B cell (primary cell): ENCODE measurements at regions of chr14 and their contacts with region 1.

Region 1: DNA sequence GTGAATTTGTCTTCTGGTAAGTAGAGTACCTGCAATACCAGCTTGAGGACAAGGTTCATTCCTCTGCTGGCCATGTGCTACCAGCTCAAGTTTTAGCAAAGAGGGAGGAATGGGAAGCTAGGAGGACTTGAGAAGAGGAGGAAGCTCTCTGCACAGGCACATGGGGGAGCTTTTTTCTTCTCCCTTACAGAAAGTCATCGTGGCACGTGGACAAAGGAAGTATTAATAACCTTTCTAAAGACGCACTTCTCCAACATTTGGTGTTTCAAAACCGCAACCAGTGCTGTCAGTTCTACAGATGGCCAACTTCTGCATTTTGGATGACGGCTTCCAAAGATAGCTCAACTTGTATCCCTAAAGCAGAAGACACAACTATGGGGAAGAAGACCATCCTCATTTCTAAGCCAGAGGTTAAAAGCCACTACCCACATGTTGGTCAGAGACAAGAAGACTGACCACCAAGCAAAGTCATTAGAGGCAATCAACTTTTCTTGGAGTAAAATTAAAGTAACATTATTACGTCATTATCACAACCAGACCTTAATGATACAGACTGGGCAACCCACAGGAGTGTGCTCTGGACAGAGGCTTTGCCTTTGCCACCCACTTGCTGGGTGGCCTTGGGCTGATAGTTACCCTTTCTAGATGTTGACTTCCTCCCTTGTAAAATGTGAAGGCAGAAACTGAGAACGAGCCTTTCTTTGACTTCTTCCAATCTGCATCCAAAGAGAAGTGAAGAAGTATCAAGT is 12.3 kb upstream of the TMED10 start:
- DNase-seq: peak; percentile 90
- ATAC-seq: peak; percentile 78
- H3K4me3 ChIP-seq: no peak overlapping the region
- H3K4me3 Mint-ChIP-seq: peak overlapping the region; percentile 47
- H3K27ac ChIP-seq: peak overlapping the region in 1 of 2 donors; percentile 21
- H3K27ac Mint-ChIP-seq: peak overlapping the region; percentile 47
- H3K4me1 ChIP-seq: peaks cover 18 to 25% of the 10 kb centered on the region in 2 donors
- H3K4me1 Mint-ChIP-seq: peaks cover 25% of the 10 kb centered on the region
- H3K27me3 ChIP-seq: no peaks in the 10 kb centered on the region
- H3K27me3 Mint-ChIP-seq: no peaks in the 10 kb centered on the region
- CTCF ChIP-seq: peak; percentile 10

Region 2: GRCh38 chr14:75176142-75176820 is 12.4 kb before region 1 on chr14 and contains the start of gene TMED10:
- CTCF ChIA-PET with region 1: interaction called, 4 read pairs
- POLR2A ChIA-PET with region 1: interaction called, 11 read pairs
- intact Hi-C with region 1: loop called (anchors 1 kb)
- DNase-seq: peak; percentile 97
- ATAC-seq: peak; percentile 74
- H3K4me3 ChIP-seq: peak within 1 kb of the TSS; percentile 82 to 99 (median 91)
- H3K4me3 Mint-ChIP-seq: peak within 1 kb of the TSS; percentile 92
- H3K27ac ChIP-seq: peak within 1 kb of the TSS; percentile 97 to 99
- H3K27ac Mint-ChIP-seq: peak within 1 kb of the TSS; percentile 97
- H3K4me1 ChIP-seq: peaks cover 17 to 22% of the 10 kb centered on the region in 2 donors
- H3K4me1 Mint-ChIP-seq: peaks cover 32% of the 10 kb centered on the region
- H3K27me3 ChIP-seq: no peaks in the 10 kb centered on the region
- H3K27me3 Mint-ChIP-seq: no peaks in the 10 kb centered on the region
- CTCF ChIP-seq: no peak
- total RNA-seq, gene TMED10: 111 and 119 TPM in 2 replicates

Region 3: GRCh38 chr14:75202657-75203056 is 14.0 kb after region 1 on chr14:
- CTCF ChIA-PET with region 1: interaction called, 3 read pairs
- POLR2A ChIA-PET with region 1: no interaction called
- intact Hi-C with region 1: loop called (anchors 2 kb)
- DNase-seq: no peak
- ATAC-seq: no peak
- H3K4me3 ChIP-seq: no peak overlapping the region
- H3K4me3 Mint-ChIP-seq: no peak overlapping the region
- H3K27ac ChIP-seq: no peak overlapping the region
- H3K27ac Mint-ChIP-seq: no peak overlapping the region
- H3K4me1 ChIP-seq: no peaks in the 10 kb centered on the region
- H3K4me1 Mint-ChIP-seq: no peaks in the 10 kb centered on the region
- H3K27me3 ChIP-seq: no peaks in the 10 kb centered on the region
- H3K27me3 Mint-ChIP-seq: no peaks in the 10 kb centered on the region
- CTCF ChIP-seq: no peak

Region 4: DNA sequence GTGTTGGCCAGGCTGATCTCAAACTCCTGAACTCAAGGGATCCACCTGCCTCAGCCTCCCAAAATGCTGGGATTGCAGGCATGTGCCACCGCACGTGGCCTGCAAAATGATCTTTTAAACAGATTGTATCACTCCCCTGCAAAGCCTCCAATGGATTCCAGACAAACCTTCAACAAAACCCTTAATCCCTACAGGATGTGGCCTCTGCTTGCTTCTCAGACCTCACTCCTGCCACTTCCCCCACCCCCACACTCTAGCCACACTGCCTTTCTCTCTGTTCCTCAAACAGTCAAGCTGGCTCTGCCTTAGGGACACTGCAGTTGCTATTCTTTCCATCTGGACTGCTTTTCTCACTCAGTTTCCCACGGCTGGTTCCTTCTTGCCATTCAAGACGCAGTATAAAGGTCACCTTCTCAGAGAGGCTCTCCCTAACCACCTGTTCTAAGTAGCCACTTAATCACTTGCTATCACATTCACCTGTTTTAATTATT is 35.0 kb after region 1 on chr14:
- CTCF ChIA-PET with region 1: no interaction called
- POLR2A ChIA-PET with region 1: interaction called, 3 read pairs
- intact Hi-C with region 1: loop called (anchors 5 kb)
- DNase-seq: peak; percentile 64
- ATAC-seq: peak; percentile 54
- H3K4me3 ChIP-seq: no peak overlapping the region
- H3K4me3 Mint-ChIP-seq: peak overlapping the region; percentile 35
- H3K27ac ChIP-seq: no peak overlapping the region
- H3K27ac Mint-ChIP-seq: peak overlapping the region; percentile 12
- H3K4me1 ChIP-seq: peaks cover 34 to 45% of the 10 kb centered on the region in 2 donors
- H3K4me1 Mint-ChIP-seq: peaks cover 39% of the 10 kb centered on the region
- H3K27me3 ChIP-seq: no peaks in the 10 kb centered on the region
- H3K27me3 Mint-ChIP-seq: no peaks in the 10 kb centered on the region
- CTCF ChIP-seq: no peak

Region 5: GRCh38 chr14:75230140-75231045 is 41.7 kb after region 1 on chr14:
- CTCF ChIA-PET with region 1: interaction called, 3 read pairs
- POLR2A ChIA-PET with region 1: no interaction called
- intact Hi-C with region 1: loop called (anchors 2 kb)
- DNase-seq: peak; percentile 71
- ATAC-seq: peak; percentile 77
- H3K4me3 ChIP-seq: no peak overlapping the region
- H3K4me3 Mint-ChIP-seq: peak overlapping the region; percentile 48
- H3K27ac ChIP-seq: peak overlapping the region; percentile 4 to 20
- H3K27ac Mint-ChIP-seq: peak overlapping the region; percentile 17
- H3K4me1 ChIP-seq: peaks cover 28 to 35% of the 10 kb centered on the region in 2 donors
- H3K4me1 Mint-ChIP-seq: peaks cover 37% of the 10 kb centered on the region
- H3K27me3 ChIP-seq: no peaks in the 10 kb centered on the region
- H3K27me3 Mint-ChIP-seq: no peaks in the 10 kb centered on the region
- CTCF ChIP-seq: peak; percentile 26

Region 6: GRCh38 chr14:75258615-75259466 is 70.1 kb after region 1 on chr14:
- CTCF ChIA-PET with region 1: interaction called, 5 read pairs
- POLR2A ChIA-PET with region 1: interaction called, 3 read pairs
- intact Hi-C with region 1: loop called (anchors 1 kb)
- DNase-seq: peak; percentile 100
- ATAC-seq: peak; percentile 86
- H3K4me3 ChIP-seq: peak overlapping the region; percentile 60 to 72 (median 67)
- H3K4me3 Mint-ChIP-seq: peak overlapping the region; percentile 98
- H3K27ac ChIP-seq: peak overlapping the region; percentile 97 to 99
- H3K27ac Mint-ChIP-seq: peak overlapping the region; percentile 100
- H3K4me1 ChIP-seq: peaks cover 14 to 18% of the 10 kb centered on the region in 2 donors
- H3K4me1 Mint-ChIP-seq: peaks cover 29% of the 10 kb centered on the region
- H3K27me3 ChIP-seq: no peaks in the 10 kb centered on the region
- H3K27me3 Mint-ChIP-seq: peaks cover 3% of the 10 kb centered on the region
- CTCF ChIP-seq: no peak

Region 7: GRCh38 chr14:75278422-75279161 is 89.9 kb after region 1 on chr14 and contains the start of gene FOS:
- CTCF ChIA-PET with region 1: no interaction called
- POLR2A ChIA-PET with region 1: no interaction called
- intact Hi-C with region 1: loop called (anchors 1 kb)
- DNase-seq: peak; percentile 99
- ATAC-seq: peak; percentile 63
- H3K4me3 ChIP-seq: peak within 1 kb of the TSS; percentile 61 to 100 (median 95)
- H3K4me3 Mint-ChIP-seq: peak within 1 kb of the TSS; percentile 99
- H3K27ac ChIP-seq: peak within 1 kb of the TSS; percentile 50 to 93
- H3K27ac Mint-ChIP-seq: peak within 1 kb of the TSS; percentile 96
- H3K4me1 ChIP-seq: peaks cover 56 to 58% of the 10 kb centered on the region in 2 donors
- H3K4me1 Mint-ChIP-seq: peaks cover 65% of the 10 kb centered on the region
- H3K27me3 ChIP-seq: peaks cover 0 to 52% (median 28%) of the 10 kb centered on the region in 4 experiments
- H3K27me3 Mint-ChIP-seq: peaks cover 38% of the 10 kb centered on the region
- CTCF ChIP-seq: no peak
- total RNA-seq, gene FOS: 103 and 104 TPM in 2 replicates

Region 8: GRCh38 chr14:75845136-75845804 is 656.6 kb after region 1 on chr14:
- CTCF ChIA-PET with region 1: no interaction called
- POLR2A ChIA-PET with region 1: no interaction called
- intact Hi-C with region 1: no loop called
- DNase-seq: no peak
- ATAC-seq: no peak
- H3K4me3 ChIP-seq: no peak overlapping the region
- H3K4me3 Mint-ChIP-seq: no peak overlapping the region
- H3K27ac ChIP-seq: no peak overlapping the region
- H3K27ac Mint-ChIP-seq: no peak overlapping the region
- H3K4me1 ChIP-seq: no peaks in the 10 kb centered on the region
- H3K4me1 Mint-ChIP-seq: no peaks in the 10 kb centered on the region
- H3K27me3 ChIP-seq: no peaks in the 10 kb centered on the region
- H3K27me3 Mint-ChIP-seq: no peaks in the 10 kb centered on the region
- CTCF ChIP-seq: no peak